Transverse colon (tissue), 4 donors: ENCODE measurements at regions of chr9 and their contacts with region 1.

Region 1: DNA sequence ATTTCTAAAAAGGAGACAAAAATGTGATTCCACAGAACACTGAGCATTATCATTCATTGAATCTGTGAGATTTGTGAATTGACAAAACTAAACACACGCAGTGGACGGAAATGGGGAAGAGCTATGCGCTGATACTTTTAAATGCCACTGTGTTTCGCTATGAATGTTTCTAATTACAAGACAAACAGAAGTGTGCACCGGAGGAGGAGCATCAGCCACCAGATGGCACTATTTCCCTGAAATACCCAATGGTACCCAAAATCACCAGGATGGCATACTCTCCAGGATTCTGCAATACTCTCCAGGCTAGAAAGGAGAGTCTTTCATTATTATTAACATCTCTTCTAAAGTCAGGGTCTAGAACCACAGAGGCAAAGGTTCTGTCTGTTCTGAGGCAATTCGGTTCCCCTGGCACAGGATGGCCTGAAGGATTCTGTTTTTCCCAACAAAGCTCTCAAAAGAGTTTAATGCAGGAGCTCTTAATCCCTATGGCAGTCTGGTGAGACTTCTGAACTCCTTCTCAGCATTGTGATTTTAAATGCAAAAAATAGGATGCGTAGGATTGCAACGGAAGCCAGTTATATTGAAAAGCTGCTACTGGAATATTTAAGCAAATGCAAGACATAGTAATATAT is 13.8 kb upstream of the PUM3 start:
- DNase-seq: peak; percentile 62
- H3K4me3 ChIP-seq: no peak overlapping the region
- H3K27ac ChIP-seq: no peak overlapping the region
- H3K4me1 ChIP-seq: no peaks in the 10 kb centered on the region
- H3K27me3 ChIP-seq: peaks cover 22% of the 10 kb centered on the region
- CTCF ChIP-seq: peak; percentile 59 to 80 (median 77)
- EP300 ChIP-seq: no peak
- POLR2A ChIP-seq: no peak

Region 2: GRCh38 chr9:3181049-3181953 is 323.6 kb after region 1 on chr9:
- in situ Hi-C with region 1: loop called in 3 of 4 experiments (anchors 10 to 25 kb)
- intact Hi-C with region 1: loop called (anchors 5 kb)
- DNase-seq: peak; percentile 54
- H3K4me3 ChIP-seq: peak overlapping the region in 2 of 4 donors; percentile 16 to 32
- H3K27ac ChIP-seq: no peak overlapping the region
- H3K4me1 ChIP-seq: peaks cover 0 to 23% (median 15%) of the 10 kb centered on the region in 4 donors
- H3K27me3 ChIP-seq: peaks cover 35% of the 10 kb centered on the region
- CTCF ChIP-seq: peak; percentile 18 to 32 (median 27)
- EP300 ChIP-seq: no peak
- POLR2A ChIP-seq: no peak

Region 3: DNA sequence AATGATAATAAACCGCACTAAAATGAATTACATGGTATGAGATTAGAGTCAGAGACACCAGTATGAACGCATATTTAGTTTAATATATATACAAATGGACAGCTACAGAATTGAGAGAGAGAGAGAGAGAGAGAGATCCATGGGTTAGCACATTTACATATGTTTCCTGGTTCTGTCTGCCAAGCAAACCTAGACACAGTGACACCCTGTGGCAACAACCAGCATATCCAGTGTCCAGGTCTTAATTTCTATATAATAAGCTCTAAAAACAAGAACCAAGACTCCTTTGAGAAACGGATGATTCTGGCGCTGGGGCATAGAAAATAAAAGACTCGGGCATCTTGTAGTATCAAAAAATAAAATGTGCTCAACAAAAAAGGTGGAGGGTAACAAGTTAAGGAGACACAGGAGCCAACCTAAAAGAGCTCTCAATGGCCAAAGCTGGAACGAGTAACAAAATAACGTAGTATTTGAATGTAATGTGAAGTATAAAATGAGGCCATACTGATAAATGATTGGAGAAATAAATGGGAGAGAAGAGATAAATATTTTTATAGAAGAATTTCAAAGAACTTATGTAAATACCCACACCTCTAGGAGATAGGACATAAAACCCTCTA is 583.6 kb after region 1 on chr9:
- in situ Hi-C with region 1: loop called in 1 of 4 experiments (anchors 25 kb)
- intact Hi-C with region 1: no loop called
- DNase-seq: peak; percentile 31
- H3K4me3 ChIP-seq: no peak overlapping the region
- H3K27ac ChIP-seq: no peak overlapping the region
- H3K4me1 ChIP-seq: peaks cover 0 to 4% (median 0%) of the 10 kb centered on the region in 4 donors
- H3K27me3 ChIP-seq: no peaks in the 10 kb centered on the region
- CTCF ChIP-seq: peak; percentile 44 to 59 (median 54)
- EP300 ChIP-seq: no peak
- POLR2A ChIP-seq: no peak

Region 4: DNA sequence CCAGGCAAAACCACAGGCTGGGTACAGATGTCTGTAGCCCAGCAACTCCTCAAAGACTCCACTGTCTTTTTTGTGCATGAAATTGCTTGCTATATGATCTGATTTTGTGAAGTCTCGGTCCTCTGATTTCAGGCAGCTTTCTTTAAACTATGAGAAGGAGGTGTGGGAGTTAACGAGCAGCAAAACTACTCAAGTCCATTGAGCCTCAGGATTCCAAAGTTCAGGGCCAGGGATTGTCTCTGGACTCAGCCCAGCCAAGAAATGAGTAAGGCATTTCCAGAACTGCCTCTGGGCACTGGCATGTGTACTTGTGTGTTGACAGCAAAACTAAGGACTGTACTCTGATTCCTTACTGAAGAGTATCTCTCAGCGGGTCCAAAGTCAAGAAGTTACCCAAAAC is 1495.6 kb after region 1 on chr9:
- in situ Hi-C with region 1: loop called in 3 of 4 experiments (anchors 25 kb)
- intact Hi-C with region 1: loop called (anchors 10 kb)
- DNase-seq: no peak
- H3K4me3 ChIP-seq: no peak overlapping the region
- H3K27ac ChIP-seq: no peak overlapping the region
- H3K4me1 ChIP-seq: no peaks in the 10 kb centered on the region
- H3K27me3 ChIP-seq: no peaks in the 10 kb centered on the region
- CTCF ChIP-seq: no peak
- EP300 ChIP-seq: no peak
- POLR2A ChIP-seq: no peak

Region 5: DNA sequence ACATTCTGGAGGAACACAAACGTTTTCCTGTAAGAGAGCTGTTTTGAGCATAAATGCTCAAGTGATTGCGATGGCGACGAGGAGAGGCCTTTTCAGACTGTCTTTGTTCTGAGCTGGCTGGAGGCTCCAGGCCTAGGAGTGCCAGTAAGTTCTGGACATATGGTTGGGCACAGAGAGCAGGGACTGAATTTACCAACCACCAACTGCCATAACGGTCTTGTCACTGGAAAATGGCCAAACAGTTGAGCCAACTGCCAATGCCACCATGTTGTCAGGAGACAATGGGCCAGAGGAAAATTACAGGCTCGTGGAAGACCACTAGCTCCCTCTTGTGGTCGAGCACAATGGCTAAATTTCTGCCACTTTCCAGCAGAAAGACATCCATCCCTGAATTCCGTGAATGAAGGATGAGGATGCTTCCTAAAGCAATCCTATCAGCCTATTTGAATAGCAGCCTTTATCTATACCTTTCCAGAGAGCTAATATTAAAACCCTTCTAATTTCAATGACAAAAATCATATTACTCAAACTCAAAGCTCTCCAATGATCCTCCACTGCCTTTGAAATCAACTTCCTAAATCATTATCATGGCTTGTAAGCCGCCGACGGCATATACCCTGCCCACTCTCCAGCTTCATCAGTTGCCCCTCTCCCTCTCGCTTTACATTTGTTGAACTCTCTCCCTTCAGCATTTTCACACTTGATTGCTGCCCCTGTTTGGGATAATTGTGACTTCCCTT is 1509.1 kb after region 1 on chr9:
- in situ Hi-C with region 1: loop called (anchors 10 to 25 kb)
- intact Hi-C with region 1: loop called (anchors 5 kb)
- DNase-seq: peak; percentile 19
- H3K4me3 ChIP-seq: no peak overlapping the region
- H3K27ac ChIP-seq: no peak overlapping the region
- H3K4me1 ChIP-seq: no peaks in the 10 kb centered on the region
- H3K27me3 ChIP-seq: no peaks in the 10 kb centered on the region
- CTCF ChIP-seq: peak; percentile 53 to 69 (median 66)
- EP300 ChIP-seq: no peak
- POLR2A ChIP-seq: no peak

Region 6: DNA sequence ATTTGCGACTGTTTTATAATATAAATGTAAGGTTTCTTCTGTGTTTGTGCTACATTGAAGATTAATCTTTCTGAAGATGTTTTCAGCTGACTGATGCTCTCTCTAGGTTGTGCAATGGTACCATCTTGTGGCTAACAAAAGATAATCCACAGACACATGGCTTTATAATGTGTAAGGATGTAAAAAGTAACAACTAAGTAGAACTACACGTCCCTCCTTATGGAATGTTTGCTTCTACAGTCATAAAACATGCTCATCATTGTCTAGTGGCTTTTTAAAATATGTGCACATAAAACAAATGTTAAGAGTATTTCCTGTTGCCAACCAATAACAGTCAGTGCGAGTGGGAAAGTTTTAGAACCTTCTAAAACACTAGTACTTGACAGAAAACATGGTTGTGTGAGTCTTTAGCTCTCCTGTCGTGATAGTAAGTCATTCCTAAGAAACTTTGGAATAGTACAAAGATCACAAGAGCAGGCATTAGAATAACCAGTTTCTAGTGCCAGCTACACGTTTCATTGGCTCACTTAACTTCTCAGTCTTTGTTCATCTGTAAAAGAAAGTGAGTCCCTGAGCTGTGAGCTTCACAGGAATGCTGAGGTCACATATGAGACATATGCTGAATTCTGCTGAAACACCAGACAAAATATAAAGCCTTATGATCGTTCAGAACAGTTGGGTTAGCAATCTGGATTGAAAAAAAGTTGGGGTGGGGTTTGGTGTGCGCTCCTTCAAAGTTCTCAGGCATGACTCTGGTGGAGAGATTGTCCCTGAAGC is 1517.9 kb after region 1 on chr9:
- in situ Hi-C with region 1: loop called (anchors 10 to 25 kb)
- intact Hi-C with region 1: loop called (anchors 5 kb)
- DNase-seq: no peak
- H3K4me3 ChIP-seq: no peak overlapping the region
- H3K27ac ChIP-seq: no peak overlapping the region
- H3K4me1 ChIP-seq: peaks cover 0 to 2% (median 0%) of the 10 kb centered on the region in 4 donors
- H3K27me3 ChIP-seq: no peaks in the 10 kb centered on the region
- CTCF ChIP-seq: peak; percentile 30 to 45 (median 38)
- EP300 ChIP-seq: no peak
- POLR2A ChIP-seq: no peak